Right cardiac atrium (tissue), 5 donors: ENCODE measurements at regions of chr16 and their contacts with region 1.

Region 1: GRCh38 chr16:11526655-11527350 is 59.9 kb downstream of the LITAF start:
- DNase-seq: no peak
- ATAC-seq: peak in 1 of 2 donors; percentile 41
- H3K4me3 ChIP-seq: no peak overlapping the region
- H3K27ac ChIP-seq: no peak overlapping the region
- H3K4me1 ChIP-seq: no peaks in the 10 kb centered on the region
- H3K27me3 ChIP-seq: no peaks in the 10 kb centered on the region

Region 2: DNA sequence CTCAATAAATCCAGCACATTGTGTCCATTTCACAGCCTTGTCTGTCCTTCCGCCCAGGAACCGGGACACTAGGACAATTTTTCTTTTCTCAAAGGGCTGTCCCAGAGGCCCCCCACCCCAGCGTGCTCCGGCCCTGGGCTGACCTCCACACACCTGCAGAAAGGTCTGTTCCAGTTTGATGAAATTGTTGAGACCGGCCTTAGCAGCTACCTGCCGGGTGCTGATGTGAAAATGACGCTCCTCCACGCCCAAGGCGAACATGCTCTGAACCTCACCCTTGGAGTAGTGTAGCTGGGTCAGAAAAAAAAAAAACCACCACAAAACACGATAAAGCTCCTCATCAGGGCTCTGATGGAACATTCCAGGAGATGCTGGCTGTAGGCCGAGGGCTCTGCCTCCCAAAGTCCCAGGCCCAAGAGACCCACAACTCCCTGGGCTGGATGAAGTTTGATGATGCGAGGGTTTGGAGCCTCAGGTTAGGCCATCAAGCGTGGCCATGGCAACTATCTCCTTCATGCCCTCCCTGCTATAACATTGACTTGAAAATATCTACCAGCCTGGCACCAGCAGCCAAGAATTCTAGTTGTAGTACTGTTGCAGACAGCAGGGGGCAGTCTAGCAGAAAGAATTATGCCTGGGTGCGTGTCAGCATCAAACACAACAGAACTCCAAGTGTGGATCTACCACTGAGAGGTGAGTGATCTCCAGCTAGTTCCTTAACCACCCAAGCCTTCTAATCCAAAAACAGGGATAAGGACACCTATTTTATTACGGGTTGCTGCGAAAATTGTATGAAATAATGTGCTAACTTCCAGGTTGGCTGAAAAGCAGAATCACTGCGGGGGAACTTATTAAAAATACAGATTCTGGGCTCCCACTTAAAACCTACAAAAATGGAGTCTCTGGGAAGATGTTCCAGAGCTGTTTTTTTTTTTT is 119.5 kb before region 1 on chr16:
- intact Hi-C with region 1: loop called in 1 of 4 experiments (anchors 10 kb)
- DNase-seq: peak in 1 of 3 donors; percentile 69
- ATAC-seq: peak in 1 of 2 donors; percentile 49
- H3K4me3 ChIP-seq: no peak overlapping the region
- H3K27ac ChIP-seq: no peak overlapping the region
- H3K4me1 ChIP-seq: no peaks in the 10 kb centered on the region
- H3K27me3 ChIP-seq: no peaks in the 10 kb centered on the region